HAP-1 (cell line): ENCODE measurements at regions of chr1 and their contacts with region 1.

Region 1: GRCh38 chr1:218345673-218346390 is 696 bp downstream of the TGFB2 start:
- DNase-seq: peak; percentile 56 to 73
- H3K4me3 ChIP-seq: peak overlapping the region; percentile 46
- H3K4me1 ChIP-seq: peaks cover 29% of the 10 kb centered on the region
- H3K27me3 ChIP-seq: no peaks in the 10 kb centered on the region

Region 2: GRCh38 chr1:218616681-218617080 is 270.8 kb after region 1 on chr1:
- in situ Hi-C with region 1: no loop called
- DNase-seq: no peak
- H3K4me3 ChIP-seq: no peak overlapping the region
- H3K4me1 ChIP-seq: peaks cover 2% of the 10 kb centered on the region
- H3K27me3 ChIP-seq: no peaks in the 10 kb centered on the region

Region 3: GRCh38 chr1:219066631-219067349 is 721.0 kb after region 1 on chr1:
- in situ Hi-C with region 1: loop called (anchors 25 kb)
- DNase-seq: peak in 1 of 2 experiments; percentile 39
- H3K4me3 ChIP-seq: no peak overlapping the region
- H3K4me1 ChIP-seq: peaks cover 5% of the 10 kb centered on the region; the same call in 1 of the 2 replicates
- H3K27me3 ChIP-seq: no peaks in the 10 kb centered on the region

Region 4: DNA sequence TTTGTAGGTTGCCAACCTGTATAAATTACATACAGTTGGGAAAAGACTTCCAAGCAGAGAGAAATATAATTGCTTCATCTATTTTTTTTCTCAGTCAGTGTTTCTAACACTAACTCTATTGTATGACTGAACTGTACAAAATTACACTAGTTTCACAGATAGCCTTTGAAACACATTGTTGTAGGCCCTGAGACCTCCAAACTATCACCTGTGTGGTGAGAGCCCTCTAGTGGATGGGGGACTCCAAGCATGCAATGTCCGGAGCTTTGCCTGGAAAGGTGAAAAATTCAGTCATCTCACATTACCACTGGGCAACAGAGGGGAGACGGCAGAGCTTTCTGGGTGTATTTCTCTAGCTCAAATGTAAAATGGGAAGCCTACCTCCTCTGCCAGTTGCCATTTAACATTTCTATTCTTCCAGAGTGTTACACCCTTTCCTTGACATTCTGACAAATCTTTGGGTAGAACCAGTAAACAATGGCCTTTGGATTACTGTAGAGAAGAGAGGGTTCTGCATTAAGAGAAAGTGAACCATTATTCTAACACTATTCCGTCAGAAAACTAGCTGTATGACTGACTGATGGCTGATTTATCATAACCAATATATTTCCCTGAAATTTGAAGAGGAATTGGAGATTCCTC is 1040.1 kb after region 1 on chr1:
- in situ Hi-C with region 1: loop called (anchors 25 kb)
- DNase-seq: peak; percentile 68 to 80
- H3K4me3 ChIP-seq: no peak overlapping the region
- H3K4me1 ChIP-seq: peaks cover 13% of the 10 kb centered on the region; the same call in 1 of the 2 replicates
- H3K27me3 ChIP-seq: no peaks in the 10 kb centered on the region

Region 5: GRCh38 chr1:219660666-219661463 is 1315.0 kb after region 1 on chr1:
- in situ Hi-C with region 1: loop called (anchors 10 kb)
- DNase-seq: peak; percentile 95 to 96
- H3K4me3 ChIP-seq: no peak overlapping the region
- H3K4me1 ChIP-seq: peaks cover 15% of the 10 kb centered on the region
- H3K27me3 ChIP-seq: no peaks in the 10 kb centered on the region

Region 6: DNA sequence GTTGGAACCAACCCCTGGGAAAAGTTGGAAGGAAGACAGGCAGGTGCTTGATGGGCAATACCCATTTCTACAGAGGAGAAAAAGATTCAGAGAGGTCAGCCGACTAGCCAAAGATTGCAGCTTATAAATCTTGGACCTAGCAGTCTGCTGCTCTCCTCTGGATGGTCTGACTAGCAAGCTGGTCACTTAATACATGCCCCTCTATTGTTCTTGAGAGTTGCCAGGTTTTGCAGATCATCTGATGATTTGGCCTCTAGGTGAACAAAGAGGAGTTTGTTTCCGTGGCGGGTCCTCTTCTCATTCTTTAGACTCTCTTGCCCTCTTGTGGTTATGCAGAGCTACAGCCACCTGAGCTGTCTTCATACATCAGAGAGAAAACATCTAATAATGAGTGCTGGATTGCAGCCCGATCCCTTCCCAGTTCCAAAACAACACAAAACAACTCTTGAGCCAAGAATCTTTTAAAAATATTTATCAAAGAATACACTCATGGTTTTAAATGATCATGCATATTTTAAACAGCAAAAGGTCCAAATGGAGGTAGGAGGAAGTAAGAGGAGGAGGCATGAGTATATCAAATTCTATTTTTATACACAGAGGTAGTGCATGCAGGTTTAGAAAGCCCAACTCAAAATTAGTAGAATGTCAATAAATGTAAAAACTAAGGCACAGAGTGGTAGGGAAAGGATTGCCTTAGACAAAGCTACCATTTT is 1466.8 kb after region 1 on chr1:
- in situ Hi-C with region 1: loop called (anchors 25 kb)
- DNase-seq: peak; percentile 69 to 83
- H3K4me3 ChIP-seq: no peak overlapping the region
- H3K4me1 ChIP-seq: peaks cover 5% of the 10 kb centered on the region; the same call in 1 of the 2 replicates
- H3K27me3 ChIP-seq: peaks cover 39% of the 10 kb centered on the region